Testis (tissue), 5 donors: ENCODE measurements at regions of chr3 and their contacts with region 1.

Region 1: GRCh38 chr3:156674046-156674910 is at the start of gene TIPARP:
- DNase-seq: peak; percentile 99
- H3K4me3 ChIP-seq: peak within 1 kb of the TSS; percentile 95 to 98
- H3K27ac ChIP-seq: peak within 1 kb of the TSS; percentile 93 to 96
- H3K4me1 ChIP-seq: peaks cover 8% of the 10 kb centered on the region
- H3K27me3 ChIP-seq: no peaks in the 10 kb centered on the region
- CTCF ChIP-seq: peak; percentile 72 to 90 (median 74)
- POLR2A ChIP-seq: peak; percentile 97
- total RNA-seq, gene TIPARP: 67.2 to 70.7 TPM

Region 2: GRCh38 chr3:156460206-156460611 is 214.1 kb before region 1 on chr3:
- intact Hi-C with region 1: no loop called
- DNase-seq: no peak
- H3K4me3 ChIP-seq: no peak overlapping the region
- H3K27ac ChIP-seq: no peak overlapping the region
- H3K4me1 ChIP-seq: no peaks in the 10 kb centered on the region
- H3K27me3 ChIP-seq: no peaks in the 10 kb centered on the region
- CTCF ChIP-seq: no peak
- POLR2A ChIP-seq: no peak

Region 3: DNA sequence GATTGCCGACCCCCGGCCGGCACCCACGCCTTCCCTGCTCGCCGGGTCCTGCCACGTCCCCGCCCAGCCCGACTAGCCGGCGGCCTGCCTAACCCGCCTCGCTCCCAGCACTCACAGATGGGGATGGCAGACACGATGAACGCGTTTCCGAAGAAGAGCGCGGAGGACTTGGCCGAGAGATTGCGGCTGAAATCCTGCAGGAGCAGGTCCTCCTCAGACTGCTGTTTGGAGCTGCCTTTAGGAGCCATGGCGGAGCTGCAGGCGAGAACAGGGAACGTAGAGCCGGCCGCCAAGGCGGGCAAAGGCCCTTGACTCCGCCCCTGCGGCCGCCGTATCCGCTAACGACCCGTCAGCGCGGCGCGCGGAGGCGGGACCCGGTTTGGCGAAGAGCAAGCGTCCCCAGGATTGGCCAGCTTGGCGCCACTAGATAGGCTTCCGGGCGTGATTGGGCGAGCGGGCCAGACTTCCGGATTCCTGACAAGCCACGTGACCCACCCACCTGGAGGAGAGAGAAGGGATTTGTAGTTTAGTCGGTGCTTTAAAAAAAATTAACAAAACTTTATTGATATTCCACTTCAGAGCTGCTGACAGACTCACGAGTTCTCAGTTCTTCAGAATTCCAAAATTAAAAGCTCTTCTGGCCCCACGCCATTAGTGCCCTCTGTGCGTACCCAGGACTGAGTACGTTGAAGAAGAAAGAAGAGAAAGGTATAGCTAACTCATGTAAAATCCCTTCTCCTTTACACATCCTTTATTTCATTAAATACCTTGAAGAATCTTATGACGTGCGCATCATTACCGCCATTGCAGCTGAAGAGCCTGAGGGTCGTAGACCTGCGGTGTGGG is 119.2 kb before region 1 on chr3 and contains the start of gene SSR3:
- intact Hi-C with region 1: loop called (anchors 10 kb)
- DNase-seq: peak; percentile 100
- H3K4me3 ChIP-seq: peak within 1 kb of the TSS; percentile 82 to 83
- H3K27ac ChIP-seq: peak within 1 kb of the TSS; percentile 73 to 83
- H3K4me1 ChIP-seq: peaks cover 15% of the 10 kb centered on the region
- H3K27me3 ChIP-seq: no peaks in the 10 kb centered on the region
- CTCF ChIP-seq: peak in 2 of 3 experiments; percentile 33 to 66
- POLR2A ChIP-seq: peak; percentile 75
- total RNA-seq, gene SSR3: 85.0 to 108 TPM

Region 4: DNA sequence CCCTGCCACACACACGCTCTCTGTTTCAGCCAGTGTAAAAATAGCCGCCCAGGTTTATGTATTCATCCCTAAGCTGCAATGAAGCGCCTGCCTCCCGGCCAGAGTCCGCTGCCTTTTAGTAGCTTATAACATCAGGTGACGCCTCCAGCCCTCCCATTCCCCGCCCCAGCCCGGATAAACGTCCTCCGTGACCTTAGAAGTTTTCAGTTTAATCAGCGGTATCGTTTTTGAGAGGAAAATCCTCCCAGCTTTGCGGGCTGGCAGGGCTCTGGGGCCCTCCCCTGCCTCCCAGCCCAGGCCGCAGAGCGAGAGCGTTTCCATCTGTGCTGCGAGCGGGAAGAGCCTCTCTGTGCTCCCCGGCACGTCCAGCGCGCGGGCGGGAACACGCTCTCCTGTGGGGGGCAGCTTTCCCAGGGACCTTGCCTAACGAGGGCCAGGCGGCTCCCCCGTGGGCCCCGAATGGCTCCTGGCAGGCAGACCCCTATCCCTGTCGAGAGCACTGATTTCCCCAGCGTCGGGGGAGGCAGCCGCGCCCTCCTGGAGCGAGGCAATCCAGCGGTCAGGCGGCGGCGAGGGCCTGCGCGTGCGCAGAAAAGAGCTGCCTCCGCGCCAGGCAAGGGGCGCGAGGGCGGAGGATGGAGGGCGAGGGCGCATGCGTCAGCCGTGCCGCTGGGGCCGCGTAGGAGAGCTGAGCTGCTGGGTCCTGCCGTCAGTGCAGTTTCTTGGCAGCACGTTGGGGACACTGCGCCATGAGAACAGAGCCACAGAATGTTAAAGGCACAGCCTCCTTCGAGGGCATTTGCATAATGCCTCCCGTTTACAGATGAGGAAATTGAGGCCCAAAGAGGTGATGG is 414.6 kb after region 1 on chr3:
- intact Hi-C with region 1: loop called (anchors 5 kb)
- DNase-seq: peak; percentile 96
- H3K4me3 ChIP-seq: peak overlapping the region; percentile 60 to 64
- H3K27ac ChIP-seq: peak overlapping the region; percentile 97 to 99
- H3K4me1 ChIP-seq: peaks cover 40% of the 10 kb centered on the region
- H3K27me3 ChIP-seq: no peaks in the 10 kb centered on the region
- CTCF ChIP-seq: peak in 1 of 3 experiments; percentile 44
- POLR2A ChIP-seq: no peak

Region 5: GRCh38 chr3:157130467-157131251 is 456.4 kb after region 1 on chr3:
- intact Hi-C with region 1: loop called (anchors 10 kb)
- DNase-seq: peak; percentile 73
- H3K4me3 ChIP-seq: peak overlapping the region; percentile 7 to 23
- H3K27ac ChIP-seq: peak overlapping the region; percentile 84 to 86
- H3K4me1 ChIP-seq: peaks cover 63% of the 10 kb centered on the region
- H3K27me3 ChIP-seq: no peaks in the 10 kb centered on the region
- CTCF ChIP-seq: peak; percentile 55 to 70 (median 68)
- POLR2A ChIP-seq: no peak

Region 6: GRCh38 chr3:157542711-157543500 is 868.6 kb after region 1 on chr3:
- intact Hi-C with region 1: no loop called
- DNase-seq: peak; percentile 78
- H3K4me3 ChIP-seq: peak overlapping the region; percentile 50 to 62
- H3K27ac ChIP-seq: no peak overlapping the region
- H3K4me1 ChIP-seq: no peaks in the 10 kb centered on the region
- H3K27me3 ChIP-seq: no peaks in the 10 kb centered on the region
- CTCF ChIP-seq: peak in 1 of 3 experiments; percentile 8
- POLR2A ChIP-seq: no peak